Activated CD4-positive, alpha-beta memory T cell treated with anti-CD3 and anti-CD28 coated beads for 36 hours (primary cell): ENCODE measurements at regions of chr10 and their contacts with region 1.

Region 1: DNA sequence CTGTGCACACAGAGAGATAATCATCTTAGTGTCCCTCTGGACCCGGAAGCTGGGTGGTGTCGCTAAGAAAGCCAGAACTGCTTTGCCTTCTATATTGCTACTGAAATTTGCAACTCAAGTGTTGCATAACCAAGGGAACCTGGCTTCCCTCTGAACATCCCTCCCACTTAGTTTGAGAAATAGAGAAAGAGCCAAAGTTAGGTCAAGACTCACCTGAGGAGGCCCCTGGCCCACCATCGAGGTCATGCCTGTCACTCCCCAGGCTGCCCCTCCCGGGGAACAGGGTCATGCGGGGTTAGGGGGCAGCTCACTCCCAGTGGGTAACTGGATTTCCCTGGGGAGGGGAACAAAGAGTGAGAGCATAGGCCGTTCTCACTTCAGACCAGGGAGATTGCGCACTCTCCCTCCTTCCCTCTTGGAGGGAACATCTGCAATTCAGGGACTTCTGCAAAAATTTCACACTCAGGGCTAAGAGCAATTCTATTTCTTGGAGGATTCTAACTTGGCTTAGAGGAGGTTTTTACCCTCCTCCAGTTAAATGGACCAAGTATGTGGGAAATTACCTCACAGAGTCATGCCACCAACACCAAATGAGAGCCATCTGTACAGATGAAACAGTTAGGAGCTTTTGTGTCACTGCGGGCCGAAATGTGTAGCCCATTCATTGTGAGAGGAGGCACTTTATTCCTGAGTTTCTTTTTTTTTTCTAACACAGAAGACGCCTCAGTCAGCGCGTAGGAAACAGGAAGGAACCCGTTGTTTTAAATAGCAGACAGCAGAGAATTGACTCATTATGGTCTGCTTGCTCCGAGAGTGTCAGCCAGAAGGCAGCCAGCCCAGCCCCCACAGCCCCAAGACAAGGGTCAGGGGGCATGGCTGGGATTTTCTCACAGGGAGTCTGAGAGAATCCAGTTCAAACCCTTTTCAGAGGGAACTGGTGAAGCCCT is 221.3 kb downstream of the ARHGAP12 start:
- DNase-seq: peak; percentile 81
- H3K4me3 Mint-ChIP-seq: peak overlapping the region; percentile 23
- H3K27ac Mint-ChIP-seq: peak overlapping the region; percentile 84
- H3K4me1 Mint-ChIP-seq: peaks cover 24% of the 10 kb centered on the region
- H3K27me3 Mint-ChIP-seq: no peaks in the 10 kb centered on the region

Region 2: GRCh38 chr10:31340343-31340742 is 367.0 kb before region 1 on chr10:
- CTCF ChIA-PET with region 1: no interaction called
- POLR2A ChIA-PET with region 1: no interaction called
- intact Hi-C with region 1: loop called (anchors 10 kb)
- DNase-seq: peak; percentile 38
- H3K4me3 Mint-ChIP-seq: no peak overlapping the region
- H3K27ac Mint-ChIP-seq: no peak overlapping the region
- H3K4me1 Mint-ChIP-seq: peaks cover 24% of the 10 kb centered on the region
- H3K27me3 Mint-ChIP-seq: no peaks in the 10 kb centered on the region

Region 3: DNA sequence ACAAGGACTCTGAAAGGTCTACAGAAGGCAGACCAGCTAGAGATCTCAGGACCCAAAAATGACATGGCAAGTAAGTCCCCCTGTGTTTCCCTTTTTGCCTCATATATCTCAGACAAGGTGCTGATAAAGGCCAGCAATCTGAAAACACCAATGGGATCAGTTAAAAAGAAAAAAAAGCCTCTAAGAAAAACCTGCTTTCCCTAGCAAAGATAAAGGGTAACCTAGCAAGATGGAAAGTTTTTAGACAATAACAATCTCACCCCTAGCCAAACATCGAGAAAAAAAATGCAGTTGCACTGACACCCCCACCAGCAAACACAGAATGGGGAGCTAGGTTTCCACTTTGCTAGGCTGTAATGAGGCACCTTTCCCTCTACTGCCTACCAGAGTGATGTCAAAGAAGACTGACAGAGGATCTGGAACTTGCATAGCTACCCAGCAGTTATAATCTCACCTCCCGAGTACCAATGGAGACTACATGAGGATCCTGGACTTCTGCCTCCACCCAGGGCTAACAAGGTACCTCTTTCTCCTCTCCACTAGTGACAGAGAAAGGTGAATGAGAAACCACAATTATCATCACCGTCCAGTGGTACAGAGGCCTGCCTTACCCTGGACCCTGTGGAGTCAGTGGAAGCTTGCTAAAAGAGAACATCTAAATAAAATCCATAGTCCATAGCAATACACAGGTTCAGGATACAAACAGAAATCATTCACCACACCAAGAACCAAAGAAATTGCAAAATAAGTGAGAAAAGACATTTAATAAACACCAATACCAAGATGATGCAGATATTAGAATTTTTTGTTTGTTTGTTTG is 19.5 kb before region 1 on chr10:
- CTCF ChIA-PET with region 1: no interaction called
- POLR2A ChIA-PET with region 1: no interaction called
- intact Hi-C with region 1: loop called (anchors 2 kb)
- DNase-seq: no peak
- H3K4me3 Mint-ChIP-seq: no peak overlapping the region
- H3K27ac Mint-ChIP-seq: no peak overlapping the region
- H3K4me1 Mint-ChIP-seq: no peaks in the 10 kb centered on the region
- H3K27me3 Mint-ChIP-seq: no peaks in the 10 kb centered on the region

Region 4: GRCh38 chr10:31745612-31746376 is 38.4 kb after region 1 on chr10:
- CTCF ChIA-PET with region 1: no interaction called
- POLR2A ChIA-PET with region 1: interaction called, 5 read pairs
- intact Hi-C with region 1: loop called (anchors 1 kb)
- DNase-seq: peak; percentile 76
- H3K4me3 Mint-ChIP-seq: peak overlapping the region; percentile 38
- H3K27ac Mint-ChIP-seq: peak overlapping the region; percentile 95
- H3K4me1 Mint-ChIP-seq: peaks cover 38% of the 10 kb centered on the region
- H3K27me3 Mint-ChIP-seq: no peaks in the 10 kb centered on the region

Region 5: DNA sequence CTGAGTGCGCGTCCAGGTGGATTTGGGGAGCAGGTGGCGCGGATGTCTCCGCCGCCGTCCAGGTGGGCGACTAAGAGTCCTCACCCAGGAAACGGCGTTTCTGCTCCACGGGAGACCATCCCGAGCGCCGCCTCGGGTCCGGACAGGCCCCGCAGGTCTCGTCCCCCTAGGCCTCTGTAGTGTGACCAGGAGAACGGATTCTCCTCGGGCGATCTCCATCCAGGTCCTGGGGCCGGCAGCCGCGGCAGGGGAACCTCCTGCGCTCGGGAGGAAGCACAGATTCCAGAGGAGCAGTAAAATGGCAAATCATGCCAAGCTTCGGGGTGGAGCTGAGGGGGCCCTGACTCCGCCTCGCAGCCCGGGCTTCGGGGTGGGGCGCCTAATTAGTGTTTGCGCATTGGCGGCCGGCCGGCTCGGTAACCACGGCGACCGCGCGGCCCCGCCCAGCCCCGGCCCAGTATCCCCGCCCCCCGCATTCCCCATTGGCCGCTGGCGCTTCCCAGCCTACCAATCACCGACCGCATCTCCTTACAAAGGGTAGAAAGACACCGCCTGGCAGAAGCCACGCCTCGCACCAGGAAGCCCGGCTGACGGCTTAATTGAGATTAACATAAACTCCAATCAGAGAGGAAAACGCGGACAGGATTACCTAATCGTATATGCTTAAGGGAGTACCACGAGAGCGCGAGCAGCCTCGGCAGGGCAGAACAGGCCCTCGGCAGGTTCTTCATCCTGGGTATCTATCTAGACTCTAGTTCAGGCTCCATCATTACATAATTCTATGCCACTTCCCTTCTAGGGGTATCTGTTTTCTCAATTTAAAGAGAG is 52.6 kb after region 1 on chr10:
- CTCF ChIA-PET with region 1: no interaction called
- POLR2A ChIA-PET with region 1: interaction called, 11 read pairs
- intact Hi-C with region 1: loop called (anchors 1 kb)
- DNase-seq: peak; percentile 97
- H3K4me3 Mint-ChIP-seq: peak overlapping the region; percentile 96
- H3K27ac Mint-ChIP-seq: peak overlapping the region; percentile 91
- H3K4me1 Mint-ChIP-seq: peaks cover 10% of the 10 kb centered on the region
- H3K27me3 Mint-ChIP-seq: no peaks in the 10 kb centered on the region

Region 6: DNA sequence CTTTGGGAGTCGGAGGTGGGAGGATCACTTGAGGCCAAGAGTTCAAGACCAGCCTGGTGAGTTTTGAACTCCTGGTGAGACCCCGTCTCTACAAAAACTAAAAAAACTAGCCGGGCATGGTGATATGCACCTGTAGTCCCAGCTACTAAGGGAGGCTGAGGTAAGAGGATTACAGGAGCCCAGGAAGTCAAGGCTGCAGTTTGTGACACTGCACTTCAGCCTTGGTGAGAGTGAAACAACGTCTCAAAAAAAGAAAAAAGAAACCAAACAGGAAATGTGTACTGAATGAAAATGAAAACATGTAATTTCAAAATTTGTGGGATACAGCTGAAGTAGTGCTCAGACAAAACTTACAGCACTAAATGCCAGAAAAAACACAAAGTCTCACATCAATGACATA is 213.7 kb after region 1 on chr10:
- CTCF ChIA-PET with region 1: no interaction called
- POLR2A ChIA-PET with region 1: no interaction called
- intact Hi-C with region 1: loop called (anchors 2 kb)
- DNase-seq: peak; percentile 43
- H3K4me3 Mint-ChIP-seq: peak overlapping the region; percentile 45
- H3K27ac Mint-ChIP-seq: peak overlapping the region; percentile 35
- H3K4me1 Mint-ChIP-seq: peaks cover 56% of the 10 kb centered on the region
- H3K27me3 Mint-ChIP-seq: no peaks in the 10 kb centered on the region